ENCODE measurements at regions of chr14 and their contacts with region 1.

Region 1: DNA sequence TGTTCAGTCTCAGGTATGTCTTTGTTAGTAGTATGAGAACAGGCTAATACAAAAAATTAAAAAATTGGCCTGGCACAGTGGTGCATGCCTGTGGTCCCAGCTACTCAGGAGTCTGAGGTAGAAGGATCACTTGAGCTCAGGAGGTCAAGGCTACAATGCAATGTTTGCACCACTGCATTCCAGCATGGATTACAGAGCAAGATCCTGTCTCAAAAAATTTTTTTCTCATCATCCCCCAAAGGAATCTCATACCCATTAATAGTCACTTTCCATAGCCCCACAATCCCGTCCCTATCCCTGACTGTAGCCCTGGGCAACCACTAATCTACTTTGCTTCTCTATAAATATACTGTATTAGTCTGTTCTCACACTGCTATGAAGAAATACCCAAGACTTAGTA is 57.8 kb downstream of the TTC8 start:
- DNase-seq: no peak
- ATAC-seq: no peak
- H3K4me3 ChIP-seq: no peak overlapping the region
- H3K27ac ChIP-seq: no peak overlapping the region
- H3K4me1 ChIP-seq: no peaks in the 10 kb centered on the region
- H3K27me3 ChIP-seq: no peaks in the 10 kb centered on the region
- CTCF ChIP-seq: no peak

Region 2: DNA sequence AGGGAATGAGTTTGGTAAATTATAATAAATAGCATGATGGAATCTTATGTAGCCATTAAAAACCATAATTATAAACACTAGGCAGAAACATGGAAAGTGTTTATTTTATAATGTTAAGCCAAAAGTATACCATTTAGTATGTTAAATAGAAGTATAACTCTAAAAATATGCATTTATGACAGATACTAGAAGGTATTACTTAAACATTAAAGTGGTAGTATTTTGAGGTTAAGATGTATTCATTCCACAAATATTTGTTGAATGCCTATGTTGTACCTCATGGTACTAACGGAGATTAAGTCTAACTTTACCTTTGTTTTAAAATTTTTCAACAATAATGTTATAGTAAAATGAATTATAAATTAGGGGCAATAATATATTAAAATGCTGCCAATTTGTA is 33.7 kb before region 1 on chr14:
- CTCF ChIA-PET with region 1: no interaction called
- POLR2A ChIA-PET with region 1: no interaction called
- in situ Hi-C with region 1: no loop called
- intact Hi-C with region 1: no loop called
- DNase-seq: no peak
- ATAC-seq: no peak
- H3K4me3 ChIP-seq: no peak overlapping the region
- H3K27ac ChIP-seq: no peak overlapping the region
- H3K4me1 ChIP-seq: no peaks in the 10 kb centered on the region
- H3K27me3 ChIP-seq: no peaks in the 10 kb centered on the region
- CTCF ChIP-seq: no peak

Region 3: GRCh38 chr14:88899182-88899581 is 16.9 kb after region 1 on chr14:
- CTCF ChIA-PET with region 1: no interaction called
- POLR2A ChIA-PET with region 1: interaction called, 12 read pairs
- in situ Hi-C with region 1: no loop called
- intact Hi-C with region 1: no loop called
- DNase-seq: no peak
- ATAC-seq: no peak
- H3K4me3 ChIP-seq: no peak overlapping the region
- H3K27ac ChIP-seq: no peak overlapping the region
- H3K4me1 ChIP-seq: no peaks in the 10 kb centered on the region
- H3K27me3 ChIP-seq: no peaks in the 10 kb centered on the region
- CTCF ChIP-seq: no peak

Measured in Panc1 (cell line).